ENCODE measurements at regions of chr17 and their contacts with region 1.

Region 1: DNA sequence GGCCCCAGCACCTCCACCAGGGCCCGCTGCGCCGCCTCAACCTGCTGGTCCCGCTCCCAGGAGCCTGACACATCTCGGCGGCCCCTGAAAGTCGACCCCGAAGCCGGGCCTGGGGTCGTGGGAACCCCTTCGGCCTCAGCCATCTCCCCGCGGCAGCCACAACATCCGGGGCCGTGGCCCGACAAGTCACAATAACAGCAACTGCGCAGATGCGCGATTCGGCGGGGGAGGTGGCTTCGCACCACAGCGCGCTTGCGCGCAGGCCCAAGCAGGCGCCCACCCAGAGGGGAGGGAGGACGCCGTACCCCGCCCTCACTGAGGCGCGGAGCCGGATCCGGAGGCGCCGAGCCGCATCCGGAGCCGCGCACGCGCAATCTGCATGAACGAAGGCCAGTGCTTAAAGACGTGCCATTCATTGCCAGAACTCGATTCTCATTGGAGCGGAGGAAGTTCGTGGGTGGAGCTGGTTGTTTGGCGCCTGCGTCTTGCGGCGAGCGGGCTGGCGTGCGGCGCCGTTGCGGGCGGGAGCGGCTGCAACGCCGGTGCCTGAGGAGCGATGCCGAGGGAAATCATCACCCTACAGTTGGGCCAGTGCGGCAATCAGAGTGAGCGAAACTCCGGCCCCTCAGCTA is at the starts of genes RETREG3 and TUBG1:
- DNase-seq: peak; percentile 98 to 100 (median 99)
- ATAC-seq: peak; percentile 92
- H3K4me3 ChIP-seq: peak within 1 kb of the TSS; percentile 90 to 94
- H3K4me3 Mint-ChIP-seq: peak within 1 kb of the TSS; percentile 100
- H3K27ac ChIP-seq: peak within 1 kb of the TSS; percentile 90 to 91
- H3K27ac Mint-ChIP-seq: peak within 1 kb of the TSS; percentile 99
- H3K4me1 ChIP-seq: peaks cover 39% of the 10 kb centered on the region
- H3K4me1 Mint-ChIP-seq: peaks cover 48% of the 10 kb centered on the region
- H3K27me3 ChIP-seq: no peaks in the 10 kb centered on the region
- H3K27me3 Mint-ChIP-seq: no peaks in the 10 kb centered on the region
- CTCF ChIP-seq: no peak
- total RNA-seq, gene RETREG3: 59.0 to 59.3 TPM
- total RNA-seq, gene TUBG1: 4.9 to 8.4 TPM

Region 2: DNA sequence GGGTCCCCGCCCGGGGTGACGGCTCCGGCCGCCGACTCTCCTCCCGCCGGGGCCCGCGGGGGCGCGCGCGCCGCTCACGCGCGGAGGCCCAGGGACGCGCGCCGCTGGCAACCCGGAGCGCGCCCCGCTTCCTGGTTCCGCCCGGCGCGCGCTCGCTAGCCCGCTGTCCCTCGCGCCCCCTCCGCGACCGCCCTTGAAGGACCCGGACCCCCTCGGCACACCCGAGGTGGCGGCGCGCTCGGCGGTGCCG is 333.0 kb before region 1 on chr17 and contains the start of gene STAT5B:
- CTCF ChIA-PET with region 1: no interaction called
- POLR2A ChIA-PET with region 1: no interaction called
- intact Hi-C with region 1: no loop called
- DNase-seq: peak; percentile 30 to 89 (median 66)
- ATAC-seq: peak; percentile 33
- H3K4me3 ChIP-seq: peak within 1 kb of the TSS; percentile 72 to 84
- H3K4me3 Mint-ChIP-seq: peak within 1 kb of the TSS; percentile 96
- H3K27ac ChIP-seq: peak within 1 kb of the TSS; percentile 77 to 83
- H3K27ac Mint-ChIP-seq: peak within 1 kb of the TSS; percentile 98
- H3K4me1 ChIP-seq: peaks cover 48% of the 10 kb centered on the region
- H3K4me1 Mint-ChIP-seq: peaks cover 52% of the 10 kb centered on the region
- H3K27me3 ChIP-seq: no peaks in the 10 kb centered on the region
- H3K27me3 Mint-ChIP-seq: no peaks in the 10 kb centered on the region
- CTCF ChIP-seq: no peak
- total RNA-seq, gene STAT5B: 85.2 to 85.5 TPM

Region 3: GRCh38 chr17:42312285-42313130 is 296.8 kb before region 1 on chr17:
- CTCF ChIA-PET with region 1: no interaction called
- POLR2A ChIA-PET with region 1: no interaction called
- intact Hi-C with region 1: no loop called
- DNase-seq: peak; percentile 45 to 89 (median 79)
- ATAC-seq: peak; percentile 61
- H3K4me3 ChIP-seq: peak overlapping the region; percentile 20 to 38
- H3K4me3 Mint-ChIP-seq: peak overlapping the region; percentile 74
- H3K27ac ChIP-seq: peak overlapping the region; percentile 31 to 66
- H3K27ac Mint-ChIP-seq: peak overlapping the region; percentile 86
- H3K4me1 ChIP-seq: peaks cover 69% of the 10 kb centered on the region
- H3K4me1 Mint-ChIP-seq: peaks cover 72% of the 10 kb centered on the region
- H3K27me3 ChIP-seq: no peaks in the 10 kb centered on the region
- H3K27me3 Mint-ChIP-seq: no peaks in the 10 kb centered on the region
- CTCF ChIP-seq: peak; percentile 62

Region 4: GRCh38 chr17:42566883-42567573 is 42.3 kb before region 1 on chr17 and contains the start of gene MLX:
- CTCF ChIA-PET with region 1: interaction called, 4 read pairs
- POLR2A ChIA-PET with region 1: interaction called, 9 read pairs
- intact Hi-C with region 1: loop called (anchors 1 kb)
- DNase-seq: peak; percentile 75 to 96 (median 92)
- ATAC-seq: peak; percentile 75
- H3K4me3 ChIP-seq: peak within 1 kb of the TSS; percentile 88 to 91
- H3K4me3 Mint-ChIP-seq: peak within 1 kb of the TSS; percentile 97
- H3K27ac ChIP-seq: peak within 1 kb of the TSS; percentile 77
- H3K27ac Mint-ChIP-seq: peak within 1 kb of the TSS; percentile 97
- H3K4me1 ChIP-seq: peaks cover 41% of the 10 kb centered on the region
- H3K4me1 Mint-ChIP-seq: peaks cover 40% of the 10 kb centered on the region
- H3K27me3 ChIP-seq: no peaks in the 10 kb centered on the region
- H3K27me3 Mint-ChIP-seq: no peaks in the 10 kb centered on the region
- CTCF ChIP-seq: no peak
- total RNA-seq, gene MLX: 18.3 to 21.3 TPM

Region 5: DNA sequence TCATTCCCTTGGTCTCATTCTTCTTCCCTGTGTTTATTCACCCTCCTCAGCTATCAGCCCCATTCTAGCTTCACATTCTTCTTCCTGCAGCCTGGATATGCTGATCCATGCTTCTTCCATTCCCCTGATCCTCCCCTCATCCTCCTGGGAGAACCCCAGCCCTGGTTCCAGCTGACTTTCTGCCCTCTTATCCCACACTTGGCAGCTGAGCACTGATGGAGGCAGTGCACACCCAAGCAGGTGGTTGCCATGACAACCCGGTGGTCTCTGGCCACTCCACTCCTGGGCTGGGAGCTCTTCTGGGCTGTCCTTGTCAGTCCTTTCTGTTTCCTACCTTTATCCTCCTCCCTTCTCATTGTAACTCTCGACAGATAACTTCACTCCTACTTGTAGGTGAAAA is 33.0 kb after region 1 on chr17:
- CTCF ChIA-PET with region 1: no interaction called
- POLR2A ChIA-PET with region 1: no interaction called
- intact Hi-C with region 1: no loop called
- DNase-seq: no peak
- ATAC-seq: no peak
- H3K4me3 ChIP-seq: no peak overlapping the region
- H3K4me3 Mint-ChIP-seq: no peak overlapping the region
- H3K27ac ChIP-seq: no peak overlapping the region
- H3K27ac Mint-ChIP-seq: no peak overlapping the region
- H3K4me1 ChIP-seq: no peaks in the 10 kb centered on the region
- H3K4me1 Mint-ChIP-seq: no peaks in the 10 kb centered on the region
- H3K27me3 ChIP-seq: no peaks in the 10 kb centered on the region
- H3K27me3 Mint-ChIP-seq: peaks cover 6% of the 10 kb centered on the region
- CTCF ChIP-seq: no peak

Region 6: GRCh38 chr17:42677008-42677857 is 67.9 kb after region 1 on chr17:
- CTCF ChIA-PET with region 1: interaction called, 12 read pairs
- POLR2A ChIA-PET with region 1: interaction called, 5 read pairs
- intact Hi-C with region 1: loop called (anchors 1 kb)
- DNase-seq: peak; percentile 94 to 99 (median 97)
- ATAC-seq: peak; percentile 85
- H3K4me3 ChIP-seq: peak overlapping the region; percentile 54 to 62
- H3K4me3 Mint-ChIP-seq: peak overlapping the region; percentile 87
- H3K27ac ChIP-seq: peak overlapping the region; percentile 25 to 49
- H3K27ac Mint-ChIP-seq: peak overlapping the region; percentile 27
- H3K4me1 ChIP-seq: peaks cover 65% of the 10 kb centered on the region
- H3K4me1 Mint-ChIP-seq: peaks cover 51% of the 10 kb centered on the region
- H3K27me3 ChIP-seq: peaks cover 31 to 58% of the 10 kb centered on the region in 2 experiments
- H3K27me3 Mint-ChIP-seq: peaks cover 41% of the 10 kb centered on the region
- CTCF ChIP-seq: no peak

Region 7: DNA sequence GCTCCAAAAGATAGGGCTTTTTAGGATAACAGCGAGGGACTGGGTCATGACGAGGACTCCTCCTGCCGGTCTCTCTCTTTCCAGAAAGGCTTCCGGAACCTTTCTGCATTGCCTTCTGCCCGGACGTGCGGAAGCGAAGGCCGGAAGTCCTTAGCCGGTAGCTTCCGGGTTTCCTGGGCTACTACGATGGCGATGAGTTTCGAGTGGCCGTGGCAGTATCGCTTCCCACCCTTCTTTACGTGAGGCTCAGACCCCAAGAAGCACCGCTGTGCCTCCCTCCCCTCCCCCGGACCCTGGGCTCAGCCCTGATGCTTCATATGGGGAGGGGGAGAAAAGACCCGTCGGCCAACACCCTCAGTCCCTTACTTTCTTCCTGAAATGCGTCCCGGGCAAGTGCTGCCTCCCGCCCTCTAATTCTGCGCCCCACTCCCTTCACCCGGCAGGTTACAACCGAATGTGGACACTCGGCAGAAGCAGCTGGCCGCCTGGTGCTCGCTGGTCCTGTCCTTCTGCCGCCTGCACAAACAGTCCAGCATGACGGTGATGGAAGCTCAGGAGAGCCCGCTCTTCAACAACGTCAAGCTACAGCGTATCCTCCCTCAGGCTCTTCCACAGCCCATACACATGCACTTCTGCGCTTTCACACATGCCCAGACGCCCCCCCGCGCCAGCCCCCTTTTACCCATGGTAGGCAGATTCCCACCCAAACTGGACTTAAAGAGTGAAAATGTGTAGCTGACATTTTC is 164.2 kb after region 1 on chr17 and contains the start of gene VPS25:
- CTCF ChIA-PET with region 1: no interaction called
- POLR2A ChIA-PET with region 1: interaction called, 3 read pairs
- intact Hi-C with region 1: loop called in 1 of 2 experiments (anchors 1 kb)
- DNase-seq: peak; percentile 39 to 90 (median 75)
- ATAC-seq: peak; percentile 94
- H3K4me3 ChIP-seq: peak within 1 kb of the TSS; percentile 87 to 99
- H3K4me3 Mint-ChIP-seq: peak within 1 kb of the TSS; percentile 99
- H3K27ac ChIP-seq: peak within 1 kb of the TSS; percentile 89 to 93
- H3K27ac Mint-ChIP-seq: peak within 1 kb of the TSS; percentile 98
- H3K4me1 ChIP-seq: peaks cover 11% of the 10 kb centered on the region
- H3K4me1 Mint-ChIP-seq: peaks cover 28% of the 10 kb centered on the region
- H3K27me3 ChIP-seq: no peaks in the 10 kb centered on the region
- H3K27me3 Mint-ChIP-seq: peaks cover under 1% of the 10 kb centered on the region
- CTCF ChIP-seq: no peak
- total RNA-seq, gene VPS25: 41.0 to 45.1 TPM